Activated B cell treated with CpG ODN at 0.5 μM for 24 hours (primary cell): ENCODE measurements at regions of chr9 and their contacts with region 1.

Region 1: DNA sequence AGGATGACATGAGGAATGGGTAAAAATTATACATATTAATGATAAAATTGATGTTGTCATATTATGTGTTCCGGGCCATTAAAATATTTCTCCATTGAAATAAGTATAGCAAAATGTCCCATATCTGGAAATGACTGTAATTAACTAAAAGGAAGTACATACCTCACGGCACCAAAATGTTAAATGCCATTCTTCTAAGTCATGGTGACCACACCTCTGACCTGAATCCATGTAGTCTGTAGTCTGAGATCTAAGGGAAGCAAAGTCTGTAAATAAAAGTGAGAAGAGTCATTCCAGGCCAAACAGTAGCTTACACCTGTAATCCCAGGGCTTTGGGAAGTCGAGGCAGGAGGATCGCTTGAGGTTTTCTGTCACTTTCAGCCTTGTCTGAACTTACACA is 8.7 kb upstream of the GDA start:
- DNase-seq: no peak
- ATAC-seq: no peak
- H3K4me3 Mint-ChIP-seq: no peak overlapping the region
- H3K27ac Mint-ChIP-seq: no peak overlapping the region
- H3K4me1 Mint-ChIP-seq: no peaks in the 10 kb centered on the region
- H3K27me3 Mint-ChIP-seq: peaks cover 16% of the 10 kb centered on the region
- CTCF ChIP-seq: no peak

Region 2: DNA sequence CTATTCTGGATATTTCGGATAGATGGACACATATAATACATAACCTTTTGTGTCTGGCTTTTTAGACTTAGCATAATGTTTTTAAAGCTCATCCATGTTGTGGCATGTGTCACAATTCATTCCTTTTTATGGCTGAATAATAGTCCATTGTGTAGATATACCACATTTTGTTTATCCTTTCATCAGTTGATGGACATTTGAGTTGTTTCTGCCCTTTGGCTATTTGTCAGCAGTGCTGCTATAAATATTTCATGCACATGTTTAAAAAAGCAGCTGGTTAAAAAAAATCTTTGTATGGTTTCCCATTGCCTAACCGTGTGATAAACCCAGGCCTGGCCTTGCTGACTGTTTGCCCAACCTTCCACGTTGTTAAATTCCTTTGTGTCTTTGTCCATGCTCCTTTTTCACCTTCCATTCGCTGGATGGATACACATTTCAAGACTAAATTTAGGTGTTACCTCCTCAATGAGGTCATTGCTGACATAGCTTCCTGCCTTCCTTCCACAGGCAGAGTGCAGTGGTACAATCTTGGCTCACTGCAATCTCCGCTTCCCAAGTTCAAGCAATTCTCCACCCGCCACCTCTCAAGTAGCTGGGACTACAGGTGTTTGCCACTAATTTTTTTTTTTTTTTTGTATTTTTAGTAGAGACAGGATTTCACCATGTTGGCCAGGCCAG is 20.0 kb after region 1 on chr9:
- CTCF ChIA-PET with region 1: no interaction called
- POLR2A ChIA-PET with region 1: no interaction called
- intact Hi-C with region 1: loop called (anchors 2 kb)
- DNase-seq: no peak
- ATAC-seq: no peak
- H3K4me3 Mint-ChIP-seq: no peak overlapping the region
- H3K27ac Mint-ChIP-seq: no peak overlapping the region
- H3K4me1 Mint-ChIP-seq: no peaks in the 10 kb centered on the region
- H3K27me3 Mint-ChIP-seq: no peaks in the 10 kb centered on the region
- CTCF ChIP-seq: no peak